ENCODE measurements at regions of chr2 and their contacts with region 1.

Region 1: DNA sequence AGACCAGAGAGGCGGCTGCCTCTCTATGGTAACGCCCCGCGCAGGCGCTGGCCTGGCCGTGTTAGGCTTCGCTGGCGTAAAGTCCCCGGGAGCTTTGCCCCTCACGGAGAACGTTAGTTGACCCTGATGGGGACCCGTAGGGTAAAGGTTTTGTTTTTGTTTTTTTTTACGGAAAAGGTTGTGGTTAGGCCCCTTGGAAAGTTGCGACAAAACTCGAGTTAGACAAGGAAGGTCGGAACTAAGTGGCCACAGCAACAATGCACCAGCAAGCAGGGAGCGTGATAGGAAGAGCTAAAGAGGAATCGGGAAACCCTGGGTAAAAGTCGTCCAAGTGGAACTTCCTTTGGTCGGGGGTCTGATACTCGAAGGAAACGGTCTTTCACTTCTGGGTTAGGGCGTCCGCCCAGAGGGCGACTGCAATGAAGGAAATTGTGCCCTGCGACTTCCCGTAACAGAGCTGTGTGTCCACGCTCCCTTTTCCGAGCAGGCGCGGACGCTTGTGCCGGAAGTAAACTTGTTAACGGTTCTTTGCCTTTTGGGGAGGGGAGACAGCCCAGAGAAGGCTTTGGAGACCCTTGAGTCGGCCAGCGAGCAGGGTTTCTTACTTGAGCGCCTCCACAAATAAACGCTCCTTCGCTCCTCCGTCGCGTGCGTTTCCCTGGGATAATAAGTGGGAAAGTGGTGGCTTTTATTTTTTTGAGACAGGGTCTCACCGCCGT is 493 bp upstream of the CLASP1 start:
- DNase-seq: peak; percentile 97
- H3K4me3 ChIP-seq: peak overlapping the region; percentile 74 to 84 (median 79)
- H3K27ac ChIP-seq: peak overlapping the region; percentile 83
- H3K4me1 ChIP-seq: peaks cover 29% of the 10 kb centered on the region
- H3K27me3 ChIP-seq: no peaks in the 10 kb centered on the region
- CTCF ChIP-seq: no peak
- POLR2A ChIP-seq: peak; percentile 82

Region 2: DNA sequence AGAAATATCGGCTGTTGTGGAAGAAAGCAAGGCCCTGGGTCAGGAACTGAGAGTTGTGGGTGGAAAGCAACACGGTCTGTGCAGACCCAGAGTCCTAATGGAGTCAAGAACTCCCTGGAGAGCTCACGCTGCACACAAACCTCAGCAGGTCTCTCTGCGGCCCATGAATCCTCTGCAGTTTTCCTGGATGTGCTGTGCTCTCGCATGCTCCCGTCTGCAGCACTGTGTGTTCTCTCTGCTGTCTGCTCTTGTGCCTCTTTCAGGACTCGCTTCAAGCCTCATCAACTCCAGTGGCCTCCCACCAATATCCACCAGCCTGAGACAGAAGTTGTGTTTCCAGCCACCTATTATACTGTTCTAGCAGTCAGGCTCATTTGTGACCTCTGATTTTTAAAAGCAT is 94.7 kb before region 1 on chr2:
- CTCF ChIA-PET with region 1: interaction called, 10 read pairs
- POLR2A ChIA-PET with region 1: no interaction called
- dilution Hi-C with region 1: no loop called
- intact Hi-C with region 1: no loop called
- DNase-seq: no peak
- H3K4me3 ChIP-seq: no peak overlapping the region
- H3K27ac ChIP-seq: no peak overlapping the region
- H3K4me1 ChIP-seq: no peaks in the 10 kb centered on the region
- H3K27me3 ChIP-seq: no peaks in the 10 kb centered on the region
- CTCF ChIP-seq: no peak
- POLR2A ChIP-seq: no peak

Region 3: DNA sequence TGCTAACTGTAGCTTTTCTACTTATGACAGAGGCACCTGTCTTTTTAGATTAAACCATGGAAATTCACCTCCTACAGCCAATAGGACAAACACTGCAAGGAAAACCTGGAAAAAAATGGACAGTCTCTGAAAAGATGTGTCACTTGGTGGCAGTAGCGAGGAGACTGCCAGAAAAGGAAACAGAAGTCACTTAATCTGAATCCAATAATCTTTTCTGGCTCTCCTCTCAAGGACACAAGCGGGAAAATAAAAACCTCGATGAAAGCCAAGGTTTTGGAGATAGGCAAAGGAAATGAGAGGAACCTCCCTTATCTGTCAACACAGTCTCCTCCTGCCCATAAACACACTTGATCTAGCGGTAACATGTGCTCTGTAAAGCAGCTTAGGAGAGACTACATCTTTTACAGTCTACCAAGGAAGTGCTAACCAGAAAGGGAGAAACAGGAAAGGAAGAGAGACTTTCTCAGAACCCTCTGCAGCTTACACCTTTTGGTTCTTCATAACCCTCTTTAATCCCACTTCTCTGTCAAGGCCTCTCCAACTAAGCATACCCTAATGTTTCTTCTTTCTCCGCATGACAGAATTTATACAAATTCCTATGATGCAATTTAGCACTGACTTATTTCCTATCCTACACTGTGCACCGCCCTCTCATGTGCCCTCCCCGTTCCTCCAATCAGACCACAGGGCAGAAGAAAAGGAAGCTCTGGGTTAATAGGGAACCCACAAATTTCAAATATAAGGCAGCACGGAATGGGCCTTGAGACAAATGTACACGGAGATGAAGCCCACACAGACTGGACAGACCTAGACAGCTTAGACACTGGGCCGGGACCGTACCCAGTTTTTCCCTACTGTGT is 53.3 kb before region 1 on chr2:
- CTCF ChIA-PET with region 1: interaction called, 10 read pairs
- POLR2A ChIA-PET with region 1: no interaction called
- dilution Hi-C with region 1: no loop called
- intact Hi-C with region 1: loop called (anchors 1 kb)
- DNase-seq: peak; percentile 81
- H3K4me3 ChIP-seq: peak overlapping the region in 2 of 3 experiments; percentile 3 to 62
- H3K27ac ChIP-seq: peak overlapping the region; percentile 56
- H3K4me1 ChIP-seq: peaks cover 14% of the 10 kb centered on the region
- H3K27me3 ChIP-seq: no peaks in the 10 kb centered on the region
- CTCF ChIP-seq: peak; percentile 29 to 35
- POLR2A ChIP-seq: no peak

Region 4: DNA sequence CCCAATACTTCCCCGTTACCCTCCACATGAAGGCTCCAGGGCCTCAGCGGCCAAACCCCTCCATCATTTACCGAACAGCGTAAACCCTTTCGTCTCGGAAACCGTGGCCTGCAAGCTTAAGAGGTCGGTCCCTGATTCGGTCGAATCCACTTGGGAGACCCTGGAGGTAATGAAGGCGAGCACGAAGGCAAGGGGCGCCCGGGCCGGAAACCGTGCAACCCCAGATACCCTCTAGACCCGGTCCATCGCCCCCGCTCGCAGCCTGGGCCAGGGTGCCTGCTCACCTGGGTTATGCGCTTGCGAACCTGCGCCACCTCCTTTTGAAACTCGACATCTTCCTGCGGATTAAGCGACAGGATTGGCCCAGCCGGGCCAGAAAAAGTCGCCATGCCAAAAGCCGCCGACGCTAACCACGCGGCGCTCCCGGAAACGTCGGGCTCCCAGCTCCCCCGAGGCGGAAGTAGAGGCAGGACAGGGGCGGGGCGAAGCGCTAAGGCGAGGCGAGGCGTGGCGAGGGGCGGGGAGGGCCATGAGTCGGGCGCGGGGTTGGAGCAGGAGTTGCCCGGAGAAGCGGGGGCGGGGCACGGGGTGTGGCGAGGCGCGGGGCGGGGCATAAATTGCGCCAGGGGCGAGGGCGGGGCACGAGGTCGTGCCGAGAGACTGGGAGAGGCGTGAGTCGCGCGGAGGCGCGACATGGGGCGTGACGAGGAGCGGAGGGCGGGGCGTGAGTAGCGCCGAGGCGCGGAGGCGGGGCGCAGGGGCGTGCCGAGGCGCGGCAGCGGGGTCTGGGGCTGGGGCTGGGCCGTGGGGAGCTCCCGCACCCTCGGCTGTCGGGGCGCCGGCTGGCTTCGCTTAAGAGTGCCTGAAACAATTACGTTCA is 86.9 kb after region 1 on chr2 and contains the start of gene NIFK:
- CTCF ChIA-PET with region 1: no interaction called
- POLR2A ChIA-PET with region 1: interaction called, 3 read pairs
- dilution Hi-C with region 1: no loop called
- intact Hi-C with region 1: loop called (anchors 1 kb)
- DNase-seq: peak; percentile 97
- H3K4me3 ChIP-seq: peak within 1 kb of the TSS; percentile 91 to 100 (median 99)
- H3K27ac ChIP-seq: peak within 1 kb of the TSS; percentile 59
- H3K4me1 ChIP-seq: peaks cover 9% of the 10 kb centered on the region
- H3K27me3 ChIP-seq: no peaks in the 10 kb centered on the region
- CTCF ChIP-seq: no peak
- POLR2A ChIP-seq: peak; percentile 85
- total RNA-seq, gene NIFK: 56.2 and 59.7 TPM in 2 replicates

Region 5: GRCh38 chr2:121755236-121756111 is 105.7 kb after region 1 on chr2 and contains the start of gene TSN:
- CTCF ChIA-PET with region 1: no interaction called
- POLR2A ChIA-PET with region 1: no interaction called
- dilution Hi-C with region 1: no loop called
- intact Hi-C with region 1: loop called (anchors 1 kb)
- DNase-seq: peak; percentile 98
- H3K4me3 ChIP-seq: peak within 1 kb of the TSS; percentile 83 to 97 (median 89)
- H3K27ac ChIP-seq: peak within 1 kb of the TSS; percentile 75
- H3K4me1 ChIP-seq: peaks cover 16% of the 10 kb centered on the region
- H3K27me3 ChIP-seq: no peaks in the 10 kb centered on the region
- CTCF ChIP-seq: no peak
- POLR2A ChIP-seq: peak; percentile 43
- total RNA-seq, gene TSN: 76.1 and 79.8 TPM in 2 replicates